HCT116 (cell line): ENCODE measurements at regions of chr7 and their contacts with region 1.

Region 1: GRCh38 chr7:143345428-143345900 is 17.0 kb downstream of the FAM131B start:
- DNase-seq: peak; percentile 73
- ATAC-seq: peak; percentile 99
- H3K4me3 ChIP-seq: peak overlapping the region; percentile 38 to 51
- H3K27ac ChIP-seq: no peak overlapping the region; the same call in 1 of the 2 replicates
- H3K4me1 ChIP-seq: peaks cover 4 to 14% of the 10 kb centered on the region in 2 experiments; a peak in 3 of 4 replicates
- H3K27me3 ChIP-seq: no peaks in the 10 kb centered on the region
- CTCF ChIP-seq: peak; percentile 70 to 78 (median 72); a peak in 5 of 6 replicates
- POLR2A ChIP-seq: no peak
- RAD21 ChIP-seq: peak; percentile 46

Region 2: GRCh38 chr7:143258831-143259230 is 86.6 kb before region 1 on chr7:
- CTCF ChIA-PET with region 1: no interaction called
- POLR2A ChIA-PET with region 1: no interaction called
- RAD21 ChIA-PET with region 1: no interaction called
- intact Hi-C with region 1: no loop called
- DNase-seq: no peak
- ATAC-seq: no peak
- H3K4me3 ChIP-seq: no peak overlapping the region
- H3K27ac ChIP-seq: no peak overlapping the region
- H3K4me1 ChIP-seq: peaks cover 9 to 24% of the 10 kb centered on the region in 2 experiments; a peak in 3 of 4 replicates
- H3K27me3 ChIP-seq: no peaks in the 10 kb centered on the region
- CTCF ChIP-seq: no peak
- POLR2A ChIP-seq: no peak
- RAD21 ChIP-seq: no peak

Region 3: GRCh38 chr7:143362131-143363015 is 16.9 kb after region 1 on chr7 and contains the start of gene FAM131B:
- CTCF ChIA-PET with region 1: interaction called, 3 read pairs
- POLR2A ChIA-PET with region 1: no interaction called
- RAD21 ChIA-PET with region 1: no interaction called
- intact Hi-C with region 1: loop called (anchors 1 kb)
- DNase-seq: no peak
- ATAC-seq: peak; percentile 56
- H3K4me3 ChIP-seq: peak within 1 kb of the TSS; percentile 34 to 53
- H3K27ac ChIP-seq: no peak within 1 kb of the TSS
- H3K4me1 ChIP-seq: peaks cover 0 to 8% of the 10 kb centered on the region in 2 experiments; a peak in 1 of 4 replicates
- H3K27me3 ChIP-seq: no peaks in the 10 kb centered on the region
- CTCF ChIP-seq: no peak
- POLR2A ChIP-seq: no peak
- RAD21 ChIP-seq: no peak
- total RNA-seq, gene FAM131B: 0.20 TPM

Region 4: DNA sequence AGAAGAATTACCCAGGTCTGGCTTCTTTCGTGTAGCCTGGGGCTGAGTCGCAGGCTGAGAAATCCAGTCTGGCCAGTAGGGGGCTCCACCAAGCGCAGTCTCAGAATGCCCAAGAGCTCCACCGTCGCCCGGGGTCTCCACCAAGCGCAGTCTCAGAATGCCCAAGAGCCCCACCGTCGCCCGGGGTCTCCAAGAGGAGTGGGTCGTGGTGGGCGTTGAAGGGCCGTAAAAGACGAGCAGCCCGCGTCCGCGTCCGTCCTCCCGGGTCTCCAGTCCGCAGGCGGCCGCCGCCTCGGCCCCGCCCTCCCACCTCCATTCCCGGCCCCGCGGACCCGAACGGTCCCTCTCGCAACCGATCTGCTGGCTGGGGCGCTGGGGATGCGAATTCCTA is 34.8 kb after region 1 on chr7:
- CTCF ChIA-PET with region 1: interaction called, 10 read pairs
- POLR2A ChIA-PET with region 1: no interaction called
- RAD21 ChIA-PET with region 1: no interaction called
- intact Hi-C with region 1: no loop called
- DNase-seq: peak; percentile 61
- ATAC-seq: peak; percentile 63
- H3K4me3 ChIP-seq: peak overlapping the region; percentile 73 to 93
- H3K27ac ChIP-seq: peak overlapping the region; percentile 96
- H3K4me1 ChIP-seq: peaks cover 13 to 32% of the 10 kb centered on the region in 2 experiments
- H3K27me3 ChIP-seq: no peaks in the 10 kb centered on the region
- CTCF ChIP-seq: peak in 2 of 3 experiments; percentile 80 to 87; a peak in 4 of 6 replicates
- POLR2A ChIP-seq: no peak
- RAD21 ChIP-seq: no peak